ENCODE measurements at regions of chr12 and their contacts with region 1.

Region 1: GRCh38 chr12:92928962-92929915 is at the start of gene EEA1:
- DNase-seq: peak; percentile 97
- ATAC-seq: peak; percentile 82
- H3K4me3 ChIP-seq: peak within 1 kb of the TSS; percentile 64 to 91 (median 79)
- H3K4me3 Mint-ChIP-seq: peak within 1 kb of the TSS; percentile 96
- H3K27ac ChIP-seq: peak within 1 kb of the TSS; percentile 90 to 96
- H3K27ac Mint-ChIP-seq: peak within 1 kb of the TSS; percentile 96
- H3K4me1 ChIP-seq: peaks cover 23 to 24% of the 10 kb centered on the region in 2 donors
- H3K4me1 Mint-ChIP-seq: peaks cover 34% of the 10 kb centered on the region
- H3K27me3 ChIP-seq: no peaks in the 10 kb centered on the region
- H3K27me3 Mint-ChIP-seq: no peaks in the 10 kb centered on the region
- CTCF ChIP-seq: no peak
- total RNA-seq, gene EEA1: 24.4 and 26.3 TPM in 2 replicates

Region 2: DNA sequence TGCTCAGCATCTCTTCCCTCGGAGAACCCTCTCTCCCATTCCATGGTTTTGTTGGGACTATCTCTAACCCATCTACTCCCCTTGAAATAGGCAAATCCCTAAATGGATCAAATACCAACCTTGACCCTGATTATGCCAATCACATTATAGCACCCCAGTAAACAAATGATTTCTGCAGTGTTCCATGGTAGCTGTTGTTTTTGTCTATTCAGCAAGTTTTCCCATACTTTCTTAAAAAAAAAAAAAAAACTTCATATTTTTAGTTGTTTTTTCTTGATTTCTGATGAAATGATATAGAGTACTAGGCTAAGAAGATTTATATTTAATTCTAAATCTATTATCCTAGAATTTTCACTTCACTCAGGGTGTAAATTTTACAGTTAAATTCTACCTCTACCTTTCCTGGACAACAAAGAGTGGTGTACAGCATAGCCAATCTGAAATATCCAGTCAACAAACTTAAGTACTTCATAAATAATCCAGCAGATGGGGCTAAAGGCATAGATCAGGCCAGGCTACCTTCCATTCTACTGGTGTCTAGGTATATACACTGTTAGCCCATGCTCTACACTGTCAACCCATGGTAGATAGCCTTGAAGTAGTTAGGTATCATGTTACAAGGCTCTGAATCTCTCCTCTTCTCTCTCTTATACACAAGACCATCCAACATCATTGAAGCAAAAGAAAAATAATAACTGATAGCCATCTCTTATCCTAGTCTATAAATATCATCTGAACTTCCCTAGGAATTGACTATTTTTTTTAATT is 144.3 kb before region 1 on chr12:
- CTCF ChIA-PET with region 1: interaction called, 6 read pairs
- POLR2A ChIA-PET with region 1: no interaction called
- intact Hi-C with region 1: loop called (anchors 1 kb)
- DNase-seq: peak; percentile 75
- ATAC-seq: peak; percentile 98
- H3K4me3 ChIP-seq: no peak overlapping the region
- H3K4me3 Mint-ChIP-seq: no peak overlapping the region
- H3K27ac ChIP-seq: no peak overlapping the region
- H3K27ac Mint-ChIP-seq: no peak overlapping the region
- H3K4me1 ChIP-seq: no peaks in the 10 kb centered on the region
- H3K4me1 Mint-ChIP-seq: no peaks in the 10 kb centered on the region
- H3K27me3 ChIP-seq: no peaks in the 10 kb centered on the region
- H3K27me3 Mint-ChIP-seq: no peaks in the 10 kb centered on the region
- CTCF ChIP-seq: peak; percentile 81

Region 3: GRCh38 chr12:92973601-92974000 is 44.4 kb after region 1 on chr12:
- CTCF ChIA-PET with region 1: no interaction called
- POLR2A ChIA-PET with region 1: interaction called, 3 read pairs
- intact Hi-C with region 1: loop called (anchors 2 kb)
- DNase-seq: no peak
- ATAC-seq: no peak
- H3K4me3 ChIP-seq: no peak overlapping the region
- H3K4me3 Mint-ChIP-seq: peak overlapping the region; percentile 50
- H3K27ac ChIP-seq: no peak overlapping the region
- H3K27ac Mint-ChIP-seq: peak overlapping the region; percentile 73
- H3K4me1 ChIP-seq: peaks cover 25 to 48% of the 10 kb centered on the region in 2 donors
- H3K4me1 Mint-ChIP-seq: peaks cover 56% of the 10 kb centered on the region
- H3K27me3 ChIP-seq: no peaks in the 10 kb centered on the region
- H3K27me3 Mint-ChIP-seq: no peaks in the 10 kb centered on the region
- CTCF ChIP-seq: no peak

Region 4: DNA sequence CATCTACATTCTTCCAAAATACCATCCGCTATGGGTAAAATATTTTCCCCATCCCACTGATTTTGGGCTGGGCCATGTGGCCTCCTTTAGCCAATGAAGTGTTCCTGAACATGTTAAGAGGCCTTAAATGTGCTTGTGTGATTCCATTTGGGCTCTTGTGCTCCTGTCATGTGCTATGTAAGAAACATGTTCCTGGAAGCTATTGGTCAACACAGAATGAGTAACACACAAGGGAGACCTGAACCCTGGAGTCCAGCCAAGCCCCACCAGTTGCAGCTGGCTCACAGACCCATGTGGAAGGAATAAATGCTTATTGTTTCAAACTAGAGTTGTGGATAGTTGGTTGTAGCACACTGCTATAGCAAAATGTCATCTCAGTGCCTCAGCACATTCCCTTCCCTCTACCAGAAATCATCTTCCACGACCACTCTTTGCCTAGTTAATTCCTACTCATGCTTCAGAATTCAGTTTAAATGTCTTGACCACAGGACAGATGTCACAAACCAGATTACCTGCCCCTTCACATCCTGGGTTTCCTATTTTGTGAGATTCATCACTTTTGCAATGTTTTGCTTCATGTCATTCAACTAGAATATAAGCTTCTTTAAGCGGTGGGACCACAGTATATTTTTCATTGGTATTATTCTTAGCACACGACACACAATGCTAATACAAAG is 217.2 kb after region 1 on chr12:
- CTCF ChIA-PET with region 1: no interaction called
- POLR2A ChIA-PET with region 1: no interaction called
- intact Hi-C with region 1: no loop called
- DNase-seq: no peak
- ATAC-seq: no peak
- H3K4me3 ChIP-seq: no peak overlapping the region
- H3K4me3 Mint-ChIP-seq: no peak overlapping the region
- H3K27ac ChIP-seq: no peak overlapping the region
- H3K27ac Mint-ChIP-seq: no peak overlapping the region
- H3K4me1 ChIP-seq: no peaks in the 10 kb centered on the region
- H3K4me1 Mint-ChIP-seq: peaks cover 3% of the 10 kb centered on the region
- H3K27me3 ChIP-seq: no peaks in the 10 kb centered on the region
- H3K27me3 Mint-ChIP-seq: no peaks in the 10 kb centered on the region
- CTCF ChIP-seq: no peak

Region 5: DNA sequence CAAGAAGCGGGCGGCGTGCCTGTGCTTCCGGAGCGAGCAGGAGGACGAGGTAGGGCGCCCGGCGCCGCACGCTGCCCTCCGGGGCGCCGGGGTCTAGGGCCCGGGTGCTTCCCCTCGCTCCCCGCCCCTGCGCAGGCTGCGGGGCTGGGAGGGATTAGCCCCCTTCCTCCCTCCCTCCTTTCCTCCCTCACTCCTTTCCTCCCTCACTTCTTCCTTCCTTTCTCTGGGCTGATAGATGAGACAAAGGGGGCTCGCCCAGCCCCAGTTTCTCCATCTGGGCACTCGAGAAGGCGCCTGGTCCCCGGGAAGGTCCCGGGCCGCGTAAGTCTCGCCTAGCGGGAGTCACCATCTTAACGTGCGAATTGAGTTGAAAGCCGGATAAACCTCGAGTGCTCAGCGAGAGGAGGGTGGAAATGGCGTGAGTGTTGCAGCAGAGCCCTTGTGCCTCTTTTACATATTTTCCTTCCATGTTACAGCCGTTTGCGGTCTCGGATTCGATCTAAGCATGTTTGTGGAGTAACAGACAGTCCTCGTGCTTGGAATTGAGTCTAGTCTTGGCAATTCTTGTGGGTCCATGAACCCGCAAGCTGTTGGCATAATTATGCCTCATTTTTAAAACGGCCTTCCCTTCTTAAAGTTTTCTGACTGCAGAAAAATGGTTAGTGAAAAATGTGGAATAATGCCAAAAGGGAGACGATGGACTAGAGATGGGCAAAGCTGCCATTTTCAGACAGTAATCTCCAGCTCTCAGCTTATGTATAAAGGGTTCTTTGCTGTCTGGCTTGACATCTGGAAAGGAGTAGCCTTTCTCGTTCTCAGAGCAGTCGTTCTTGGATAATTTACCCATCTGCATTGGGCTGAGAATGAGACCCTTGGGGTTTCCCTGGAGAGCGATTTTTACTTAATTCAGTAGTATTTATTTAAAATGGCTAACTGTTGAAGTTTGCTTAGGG is 449.4 kb after region 1 on chr12:
- CTCF ChIA-PET with region 1: interaction called, 5 read pairs
- POLR2A ChIA-PET with region 1: interaction called, 3 read pairs
- intact Hi-C with region 1: loop called (anchors 1 kb)
- DNase-seq: peak; percentile 76
- ATAC-seq: peak; percentile 44
- H3K4me3 ChIP-seq: peak overlapping the region; percentile 73 to 96 (median 86)
- H3K4me3 Mint-ChIP-seq: peak overlapping the region; percentile 98
- H3K27ac ChIP-seq: peak overlapping the region; percentile 75 to 89
- H3K27ac Mint-ChIP-seq: peak overlapping the region; percentile 98
- H3K4me1 ChIP-seq: peaks cover 20 to 29% of the 10 kb centered on the region in 2 donors
- H3K4me1 Mint-ChIP-seq: peaks cover 40% of the 10 kb centered on the region
- H3K27me3 ChIP-seq: no peaks in the 10 kb centered on the region
- H3K27me3 Mint-ChIP-seq: no peaks in the 10 kb centered on the region
- CTCF ChIP-seq: no peak

Region 6: DNA sequence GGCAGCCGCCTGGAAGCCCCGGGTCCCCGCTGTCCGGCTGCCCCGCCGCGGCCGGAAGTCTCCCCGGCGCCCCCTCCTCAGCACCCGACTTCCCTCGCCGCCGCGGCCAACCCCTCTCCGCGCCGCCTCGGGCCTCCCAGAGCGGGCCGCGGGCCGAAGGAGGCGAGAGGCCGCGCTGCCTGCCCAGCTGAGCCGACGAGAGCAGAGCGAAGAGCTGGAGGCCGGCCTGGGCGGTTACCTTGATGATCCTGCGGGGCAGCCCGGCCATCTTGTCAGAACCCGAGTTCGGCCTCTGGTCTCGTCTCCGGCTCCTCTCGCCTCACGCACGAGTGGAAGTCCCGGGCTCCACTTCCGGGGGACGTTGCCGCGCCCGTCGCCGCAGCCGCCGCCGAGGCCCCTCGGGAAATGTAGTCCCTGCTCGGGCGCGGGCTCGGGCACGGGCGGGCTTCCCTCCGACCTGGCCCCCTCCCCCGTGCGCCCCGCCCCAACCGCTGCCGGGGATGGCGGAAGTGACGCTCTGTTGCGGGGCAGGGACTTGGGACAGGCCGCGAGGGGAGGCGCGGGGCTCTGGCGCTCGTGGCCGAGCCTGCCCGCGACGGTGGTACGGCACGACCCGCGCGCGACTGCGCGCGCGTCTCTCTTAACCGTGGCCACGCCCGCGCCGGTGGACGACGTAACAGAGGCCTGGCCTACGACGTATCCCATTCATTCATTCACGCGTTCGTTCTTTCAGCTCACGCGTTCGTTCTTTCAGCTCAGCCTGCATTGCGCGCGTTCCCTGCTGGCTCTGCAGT is 512.6 kb after region 1 on chr12 and contains the start of gene UBE2N:
- CTCF ChIA-PET with region 1: no interaction called
- POLR2A ChIA-PET with region 1: no interaction called
- intact Hi-C with region 1: loop called (anchors 1 kb)
- DNase-seq: peak; percentile 97
- ATAC-seq: peak; percentile 85
- H3K4me3 ChIP-seq: peak within 1 kb of the TSS; percentile 65 to 92 (median 84)
- H3K4me3 Mint-ChIP-seq: peak within 1 kb of the TSS; percentile 94
- H3K27ac ChIP-seq: peak within 1 kb of the TSS; percentile 88 to 97
- H3K27ac Mint-ChIP-seq: peak within 1 kb of the TSS; percentile 96
- H3K4me1 ChIP-seq: peaks cover 41 to 46% of the 10 kb centered on the region in 2 donors
- H3K4me1 Mint-ChIP-seq: peaks cover 48% of the 10 kb centered on the region
- H3K27me3 ChIP-seq: no peaks in the 10 kb centered on the region
- H3K27me3 Mint-ChIP-seq: no peaks in the 10 kb centered on the region
- CTCF ChIP-seq: no peak
- total RNA-seq, gene UBE2N: 81.7 and 83.8 TPM in 2 replicates

Region 7: GRCh38 chr12:93569656-93570551 is 640.7 kb after region 1 on chr12:
- CTCF ChIA-PET with region 1: no interaction called
- POLR2A ChIA-PET with region 1: no interaction called
- intact Hi-C with region 1: loop called (anchors 10 kb)
- DNase-seq: peak; percentile 83
- ATAC-seq: peak; percentile 51
- H3K4me3 ChIP-seq: peak overlapping the region; percentile 63 to 89 (median 67)
- H3K4me3 Mint-ChIP-seq: peak overlapping the region; percentile 88
- H3K27ac ChIP-seq: no peak overlapping the region
- H3K27ac Mint-ChIP-seq: peak overlapping the region; percentile 47
- H3K4me1 ChIP-seq: peaks cover 26 to 33% of the 10 kb centered on the region in 2 donors
- H3K4me1 Mint-ChIP-seq: peaks cover 21% of the 10 kb centered on the region
- H3K27me3 ChIP-seq: peaks cover 0 to 43% (median 30%) of the 10 kb centered on the region in 4 experiments
- H3K27me3 Mint-ChIP-seq: peaks cover 44% of the 10 kb centered on the region
- CTCF ChIP-seq: peak; percentile 71

Region 8: DNA sequence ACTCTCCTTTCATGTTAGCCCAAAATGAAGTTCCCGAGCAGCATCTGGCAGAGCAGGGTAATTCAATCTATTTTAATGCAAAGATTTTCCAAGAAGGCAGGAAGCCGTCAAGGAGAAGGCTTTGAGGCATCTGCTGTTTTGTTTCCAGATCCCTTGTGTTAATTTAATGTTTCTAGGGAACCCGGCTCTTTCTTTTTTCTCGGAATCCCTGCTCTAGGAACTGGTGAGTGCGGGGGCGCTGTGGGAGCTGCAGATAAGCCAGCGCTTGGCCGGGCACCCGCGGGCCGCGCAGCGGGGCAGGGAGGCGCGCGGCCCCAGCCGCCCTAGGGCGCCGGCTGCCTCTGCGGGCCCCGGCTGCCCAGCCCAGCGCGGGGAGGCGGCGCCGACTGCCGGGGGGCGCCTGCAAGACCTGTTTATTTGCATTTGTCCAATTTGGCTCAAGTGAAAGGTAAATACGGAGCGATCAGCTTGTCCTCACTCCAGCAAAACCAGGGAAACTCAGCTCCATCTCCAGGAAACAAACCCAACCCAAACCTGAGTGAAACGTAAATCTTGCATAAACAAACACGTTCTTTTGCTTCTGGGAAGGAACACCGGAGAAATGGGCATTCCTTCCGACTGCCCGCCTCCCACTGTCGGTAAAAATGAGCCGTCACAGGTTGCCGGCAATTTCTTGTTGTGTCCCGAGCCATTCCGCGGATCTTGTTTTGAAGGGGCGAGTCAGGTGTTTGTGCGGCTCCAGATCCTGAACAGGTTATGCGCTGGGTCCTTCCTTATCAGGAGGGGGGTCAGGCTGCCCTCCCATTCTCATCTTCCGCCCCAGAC is 813.1 kb after region 1 on chr12:
- CTCF ChIA-PET with region 1: no interaction called
- POLR2A ChIA-PET with region 1: no interaction called
- intact Hi-C with region 1: loop called (anchors 5 kb)
- DNase-seq: peak; percentile 73
- ATAC-seq: peak; percentile 94
- H3K4me3 ChIP-seq: peak overlapping the region; percentile 59 to 93 (median 86)
- H3K4me3 Mint-ChIP-seq: peak overlapping the region; percentile 92
- H3K27ac ChIP-seq: peak overlapping the region; percentile 48 to 68
- H3K27ac Mint-ChIP-seq: peak overlapping the region; percentile 78
- H3K4me1 ChIP-seq: peaks cover 8 to 15% of the 10 kb centered on the region in 2 donors
- H3K4me1 Mint-ChIP-seq: peaks cover 29% of the 10 kb centered on the region
- H3K27me3 ChIP-seq: no peaks in the 10 kb centered on the region
- H3K27me3 Mint-ChIP-seq: no peaks in the 10 kb centered on the region
- CTCF ChIP-seq: peak; percentile 26